ENCODE measurements at regions of chr3 and their contacts with region 1.

Region 1: DNA sequence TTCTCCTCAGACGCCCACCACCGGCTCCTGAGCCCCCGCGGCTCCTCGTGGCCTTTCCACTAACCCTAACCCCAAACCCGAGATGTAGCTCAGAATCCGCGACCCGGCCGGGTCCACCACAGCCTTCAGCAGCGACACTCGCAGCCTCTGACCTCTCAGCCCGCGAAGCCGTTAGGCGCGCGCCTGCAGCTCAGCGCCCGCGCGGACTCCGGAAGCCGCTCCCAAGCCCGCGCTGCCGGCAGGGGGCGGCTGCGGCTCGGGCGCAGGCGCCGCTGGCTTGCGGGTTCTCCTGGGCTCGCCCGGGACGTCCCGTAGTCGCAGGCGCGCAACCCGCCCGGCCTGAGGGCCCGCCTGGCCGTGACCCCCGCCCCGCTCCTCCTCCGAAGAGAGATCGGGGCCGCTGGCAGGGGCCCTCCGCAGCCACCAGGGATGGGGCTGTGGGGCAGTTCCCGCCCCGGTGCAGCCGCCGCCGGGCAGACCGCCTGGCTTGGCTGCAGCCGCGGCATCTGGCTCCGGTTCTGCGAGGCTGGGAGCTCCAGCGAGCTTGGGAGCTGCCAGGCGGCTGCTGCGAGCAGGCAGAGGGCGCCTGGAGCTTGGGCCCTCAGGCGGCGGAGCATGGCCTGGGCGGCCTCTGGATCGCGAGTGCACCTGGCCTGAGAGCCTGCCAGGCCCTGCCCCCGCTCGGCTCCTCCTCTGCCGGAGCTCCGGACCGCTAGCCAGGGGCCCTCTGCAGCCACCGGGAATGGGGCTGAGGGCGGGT is 120.7 kb downstream of the LMLN start:
- DNase-seq: peak; percentile 85
- H3K4me3 Mint-ChIP-seq: peak overlapping the region; percentile 77
- H3K27ac Mint-ChIP-seq: peak overlapping the region; percentile 86
- H3K4me1 Mint-ChIP-seq: peaks cover 17% of the 10 kb centered on the region
- H3K27me3 Mint-ChIP-seq: peaks cover 38% of the 10 kb centered on the region

Region 2: DNA sequence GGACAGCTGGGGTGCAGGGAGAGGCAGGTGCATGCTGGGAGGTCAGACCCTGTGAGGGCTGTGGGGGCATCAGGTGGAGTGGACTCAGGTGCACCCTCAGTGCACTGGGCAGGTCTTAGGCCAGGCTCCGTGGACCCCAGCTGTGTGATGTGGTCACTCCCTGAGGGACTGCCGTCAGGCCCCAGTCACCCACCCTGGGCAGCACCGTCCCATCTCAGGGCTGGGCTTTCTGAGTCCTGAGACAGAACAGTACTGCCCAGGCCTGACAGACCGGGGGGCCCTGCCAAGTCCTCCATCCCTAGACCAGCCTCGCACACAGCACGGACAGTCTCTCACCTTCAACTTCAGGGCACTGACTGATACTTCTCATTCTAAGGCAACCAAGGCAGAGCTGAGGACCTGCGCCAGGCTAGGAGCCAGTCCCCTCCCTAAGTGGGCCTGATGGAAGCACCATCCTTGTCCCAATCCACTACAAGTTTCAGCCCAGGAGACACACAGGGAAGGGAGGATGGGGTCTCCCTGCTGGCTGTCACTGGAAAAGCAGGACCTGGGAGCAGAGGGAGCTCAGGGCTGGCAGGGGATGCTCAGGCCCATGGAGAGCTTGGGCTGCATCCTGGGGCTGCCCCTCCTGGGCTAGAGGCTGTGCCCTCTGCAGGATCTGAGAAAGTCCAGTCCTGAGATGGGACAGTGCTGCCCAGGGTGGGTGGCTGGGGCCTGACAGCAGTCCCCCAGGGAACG is 34.4 kb before region 1 on chr3:
- CTCF ChIA-PET with region 1: interaction called, 26 read pairs
- POLR2A ChIA-PET with region 1: no interaction called
- intact Hi-C with region 1: no loop called
- DNase-seq: no peak
- H3K4me3 Mint-ChIP-seq: no peak overlapping the region
- H3K27ac Mint-ChIP-seq: no peak overlapping the region
- H3K4me1 Mint-ChIP-seq: no peaks in the 10 kb centered on the region
- H3K27me3 Mint-ChIP-seq: no peaks in the 10 kb centered on the region

Region 3: DNA sequence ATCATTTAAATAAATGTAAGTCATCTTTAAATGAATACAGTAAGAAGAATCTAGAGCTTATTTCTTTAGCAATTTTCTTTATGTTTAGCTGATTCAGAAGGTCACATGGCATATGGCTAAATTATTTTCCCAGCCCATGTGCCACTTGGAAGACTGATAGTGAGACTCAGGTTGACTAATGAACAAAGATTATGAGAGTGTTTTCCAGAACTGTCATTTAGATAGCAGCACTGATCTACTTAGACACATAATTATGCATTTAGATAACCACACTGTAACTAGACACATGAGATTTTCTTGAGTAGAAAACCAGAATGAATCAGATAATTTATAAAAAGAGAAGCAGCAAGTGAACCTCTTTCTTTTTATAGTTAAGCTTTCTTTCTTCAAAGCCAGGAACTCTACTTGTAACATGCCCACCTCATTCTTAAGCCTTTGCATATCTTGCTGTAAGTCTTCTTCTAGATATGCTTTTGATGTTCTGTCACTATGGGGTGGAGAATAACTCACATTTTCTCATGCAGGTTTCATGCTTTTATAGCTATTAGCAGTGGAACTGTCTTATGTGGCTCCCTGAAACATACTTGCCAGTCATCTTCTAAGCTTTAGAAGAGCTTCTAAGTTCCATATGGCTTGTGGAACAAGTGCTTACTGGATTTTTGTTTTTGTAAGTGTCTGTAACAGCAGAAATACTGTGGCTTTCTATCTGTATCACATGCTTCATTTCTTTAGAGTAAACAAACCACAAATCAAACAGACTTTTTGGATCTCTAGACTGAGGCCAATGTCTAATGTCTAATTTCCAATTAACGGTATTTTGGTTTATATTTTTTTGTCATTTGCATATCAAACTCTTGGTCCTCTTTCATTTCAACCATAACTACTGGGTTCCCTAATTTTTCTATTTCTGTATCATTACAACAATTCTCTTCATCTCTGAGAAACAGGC is 19.3 kb before region 1 on chr3:
- CTCF ChIA-PET with region 1: interaction called, 12 read pairs
- POLR2A ChIA-PET with region 1: interaction called, 3 read pairs
- intact Hi-C with region 1: no loop called
- DNase-seq: no peak
- H3K4me3 Mint-ChIP-seq: no peak overlapping the region
- H3K27ac Mint-ChIP-seq: no peak overlapping the region
- H3K4me1 Mint-ChIP-seq: peaks cover 14% of the 10 kb centered on the region
- H3K27me3 Mint-ChIP-seq: peaks cover 9% of the 10 kb centered on the region

Measured in activated CD4-positive, alpha-beta memory T cell treated with anti-CD3 and anti-CD28 coated beads for 36 hours (primary cell).